Activated T-helper 2 cell treated with anti-CD3 and anti-CD28 coated beads, Interferon-gamma antibody, Interleukin-2, Interleukin-4, amounts not matched to agents 10 μg/mL and 5 μg/mL and 100 μg/mL, durations not matched to agents 14 hours and 24 hours and 36 hours (primary cell): ENCODE measurements at regions of chr14 and their contacts with region 1.

Region 1: DNA sequence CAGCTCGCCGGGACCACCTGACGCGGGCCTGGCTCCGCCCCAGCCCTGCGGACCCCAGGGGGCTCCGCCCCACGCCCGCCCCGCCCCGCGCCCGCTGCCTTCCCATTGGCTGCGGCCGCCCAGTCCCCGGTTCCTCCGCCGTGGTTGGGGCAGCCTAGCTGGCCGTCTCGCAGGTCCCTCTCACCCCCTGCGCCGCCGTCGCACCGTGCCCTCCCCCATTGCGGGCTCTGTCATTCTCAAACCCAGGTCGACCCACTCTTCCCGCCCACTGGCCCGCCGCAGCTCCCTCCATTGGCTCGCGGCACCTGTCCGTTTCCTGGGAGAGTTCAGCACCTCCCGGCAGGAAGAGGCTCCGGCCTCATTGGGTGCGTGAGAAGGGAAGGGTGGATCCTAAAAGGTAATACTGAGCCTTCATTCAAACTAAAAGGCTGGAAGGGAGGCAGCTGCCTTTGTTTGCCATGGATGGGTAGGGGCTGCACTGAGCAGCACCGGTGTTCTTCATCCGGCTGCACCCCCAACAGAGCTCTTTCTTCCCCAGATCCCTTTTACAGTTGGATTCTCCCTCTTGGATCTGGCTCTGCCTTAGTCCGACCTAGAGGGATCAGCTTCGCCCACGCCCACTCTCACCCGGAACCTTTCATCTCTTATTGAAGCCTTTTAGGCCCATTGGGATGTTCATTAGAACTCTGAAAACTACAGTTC is 381 bp upstream of the MAP3K9 start:
- DNase-seq: peak; percentile 91
- H3K4me3 Mint-ChIP-seq: no peak overlapping the region
- H3K27ac Mint-ChIP-seq: peak overlapping the region; percentile 64
- H3K4me1 Mint-ChIP-seq: peaks cover 10% of the 10 kb centered on the region
- H3K27me3 Mint-ChIP-seq: peaks cover 2% of the 10 kb centered on the region

Region 2: DNA sequence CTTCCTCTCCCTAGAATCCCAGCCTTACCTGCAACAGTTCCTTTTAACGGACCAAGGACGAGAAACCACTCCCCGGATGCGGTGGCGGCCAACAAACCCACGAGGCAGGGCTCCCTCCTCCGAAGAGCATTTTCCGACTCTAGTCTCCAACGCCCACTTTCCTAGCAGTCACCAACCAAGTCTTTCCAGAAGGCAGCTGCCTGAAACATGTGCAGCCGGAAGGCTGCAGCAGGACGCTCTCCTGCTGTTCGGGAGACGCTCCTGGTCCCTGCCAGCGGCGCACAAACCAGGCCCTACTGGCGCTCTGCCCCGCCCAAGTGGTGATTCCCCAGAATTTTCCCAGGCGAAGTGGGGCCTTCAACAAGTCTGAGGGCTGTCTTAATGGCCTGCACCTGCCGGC is 253.8 kb before region 1 on chr14:
- intact Hi-C with region 1: no loop called
- DNase-seq: no peak
- H3K4me3 Mint-ChIP-seq: no peak overlapping the region
- H3K27ac Mint-ChIP-seq: no peak overlapping the region
- H3K4me1 Mint-ChIP-seq: no peaks in the 10 kb centered on the region
- H3K27me3 Mint-ChIP-seq: no peaks in the 10 kb centered on the region

Region 3: DNA sequence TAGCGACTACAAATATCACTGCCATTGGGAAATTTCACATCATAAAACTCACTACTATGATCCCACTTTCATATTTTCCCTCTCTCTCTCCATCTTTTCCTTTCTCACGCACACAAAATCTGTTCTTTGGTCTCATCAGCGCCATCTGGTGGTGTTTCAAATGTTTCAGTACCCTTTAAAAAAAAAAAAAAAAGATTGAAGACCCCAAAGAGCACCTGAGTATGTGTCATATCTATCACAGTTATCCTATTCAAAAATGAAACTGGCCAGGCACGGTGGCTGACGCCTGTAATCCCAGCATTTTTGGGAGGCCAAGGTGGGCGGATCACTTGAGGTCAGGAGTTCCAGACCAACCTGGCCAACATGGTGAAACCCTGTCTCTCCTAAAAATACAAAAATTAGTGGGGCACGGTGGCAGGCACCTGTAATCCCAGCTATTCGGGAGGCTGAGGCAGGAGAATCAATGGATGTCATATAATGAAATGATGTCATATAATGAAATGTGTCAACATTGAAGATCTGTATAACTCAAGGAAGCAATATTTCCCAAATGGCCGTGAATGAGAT is 95.6 kb before region 1 on chr14:
- intact Hi-C with region 1: loop called (anchors 5 kb)
- DNase-seq: no peak
- H3K4me3 Mint-ChIP-seq: no peak overlapping the region
- H3K27ac Mint-ChIP-seq: no peak overlapping the region
- H3K4me1 Mint-ChIP-seq: peaks cover 2% of the 10 kb centered on the region
- H3K27me3 Mint-ChIP-seq: peaks cover 20% of the 10 kb centered on the region

Region 4: GRCh38 chr14:70789361-70789760 is 20.3 kb before region 1 on chr14:
- intact Hi-C with region 1: no loop called
- DNase-seq: no peak
- H3K4me3 Mint-ChIP-seq: no peak overlapping the region
- H3K27ac Mint-ChIP-seq: no peak overlapping the region
- H3K4me1 Mint-ChIP-seq: no peaks in the 10 kb centered on the region
- H3K27me3 Mint-ChIP-seq: no peaks in the 10 kb centered on the region